PC-9 (cell line): ENCODE measurements at regions of chr4 and their contacts with region 1.

Region 1: GRCh38 chr4:76881375-76881774 is 16.6 kb downstream of the SOWAHB start:
- DNase-seq: peak; percentile 34 to 84
- H3K4me3 ChIP-seq: no peak overlapping the region; the same call in 1 of the 2 replicates
- H3K27ac ChIP-seq: peak overlapping the region; percentile 34; the same call in 1 of the 2 replicates
- H3K4me1 ChIP-seq: peaks cover 24% of the 10 kb centered on the region
- H3K27me3 ChIP-seq: no peaks in the 10 kb centered on the region
- CTCF ChIP-seq: no peak

Region 2: DNA sequence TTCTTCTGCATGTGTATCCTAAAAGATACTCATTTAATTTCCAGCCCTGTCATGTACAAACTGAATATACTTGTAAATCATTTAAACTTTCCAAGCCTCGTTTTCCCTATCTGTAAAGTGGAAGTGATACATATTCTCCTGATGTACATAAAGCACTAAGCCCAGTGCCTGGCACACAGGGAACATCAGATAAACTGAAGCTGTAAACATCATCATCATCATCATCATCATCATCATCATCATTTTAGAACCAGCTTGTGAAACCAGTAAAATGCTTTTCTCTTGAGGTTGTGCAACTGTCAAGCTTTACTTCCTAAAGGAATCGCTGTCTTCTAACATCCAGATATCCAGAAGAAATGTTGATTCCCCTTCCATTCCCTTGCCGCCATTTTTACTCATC is 1586.9 kb after region 1 on chr4:
- CTCF ChIA-PET with region 1: no interaction called
- POLR2A ChIA-PET with region 1: interaction called, 10 read pairs
- intact Hi-C with region 1: no loop called
- DNase-seq: no peak
- H3K4me3 ChIP-seq: no peak overlapping the region
- H3K27ac ChIP-seq: no peak overlapping the region
- H3K4me1 ChIP-seq: no peaks in the 10 kb centered on the region
- H3K27me3 ChIP-seq: no peaks in the 10 kb centered on the region
- CTCF ChIP-seq: no peak